PC-3 (cell line): ENCODE measurements at regions of chr2 and their contacts with region 1.

Region 1: GRCh38 chr2:237791977-237792727 is 6.4 kb upstream of the RBM44 start:
- DNase-seq: peak; percentile 19
- ATAC-seq: 0 out of 2 replicates have a peak, but pooled peaks have one; percentile 29
- H3K4me3 ChIP-seq: no peak overlapping the region
- H3K27ac ChIP-seq: no peak overlapping the region
- H3K4me1 ChIP-seq: no peaks in the 10 kb centered on the region
- H3K27me3 ChIP-seq: no peaks in the 10 kb centered on the region
- CTCF ChIP-seq: peak; percentile 38

Region 2: GRCh38 chr2:237774802-237775553 is 17.2 kb before region 1 on chr2:
- CTCF ChIA-PET with region 1: interaction called, 15 read pairs
- POLR2A ChIA-PET with region 1: no interaction called
- intact Hi-C with region 1: no loop called
- DNase-seq: peak; percentile 72
- ATAC-seq: peak; percentile 98
- H3K4me3 ChIP-seq: no peak overlapping the region
- H3K27ac ChIP-seq: no peak overlapping the region
- H3K4me1 ChIP-seq: no peaks in the 10 kb centered on the region
- H3K27me3 ChIP-seq: no peaks in the 10 kb centered on the region
- CTCF ChIP-seq: peak; percentile 76

Region 3: GRCh38 chr2:237841051-237841450 is 48.9 kb after region 1 on chr2:
- CTCF ChIA-PET with region 1: no interaction called
- POLR2A ChIA-PET with region 1: no interaction called
- intact Hi-C with region 1: loop called (anchors 2 kb)
- DNase-seq: no peak
- ATAC-seq: no peak
- H3K4me3 ChIP-seq: no peak overlapping the region
- H3K27ac ChIP-seq: no peak overlapping the region
- H3K4me1 ChIP-seq: no peaks in the 10 kb centered on the region
- H3K27me3 ChIP-seq: no peaks in the 10 kb centered on the region
- CTCF ChIP-seq: no peak